SK-N-SH (cell line): ENCODE measurements at regions of chr3 and their contacts with region 1.

Region 1: DNA sequence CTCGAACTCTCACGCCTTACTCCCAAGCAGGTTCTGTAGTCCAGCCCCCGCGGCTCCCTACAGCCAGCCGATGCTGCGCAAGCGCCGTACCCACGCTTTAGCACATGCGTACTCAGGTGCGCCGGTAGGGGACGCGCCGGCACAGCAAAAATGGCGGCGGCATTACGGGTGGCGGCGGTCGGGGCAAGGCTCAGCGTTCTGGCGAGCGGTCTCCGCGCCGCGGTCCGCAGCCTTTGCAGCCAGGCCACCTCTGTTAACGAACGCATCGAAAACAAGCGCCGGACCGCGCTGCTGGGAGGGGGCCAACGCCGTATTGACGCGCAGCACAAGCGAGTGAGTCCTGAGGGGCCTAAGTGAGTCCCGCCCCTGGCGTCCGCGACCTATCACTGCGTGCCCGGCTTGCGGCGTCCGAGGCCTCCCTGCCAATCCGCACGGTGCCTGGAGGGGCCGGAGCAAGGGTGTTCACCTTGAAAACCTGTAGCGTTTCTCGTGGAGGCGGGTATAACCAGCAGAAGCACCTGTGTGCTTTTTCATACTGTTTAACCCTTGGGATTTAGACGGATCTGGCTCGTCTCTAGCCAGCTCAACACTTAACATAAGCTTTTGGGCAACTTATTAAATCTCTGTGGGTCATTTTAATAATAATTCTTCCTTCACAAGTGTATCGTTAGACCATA is at the start of gene PCCB:
- DNase-seq: peak; percentile 93
- H3K4me3 ChIP-seq: peak within 1 kb of the TSS; percentile 66 to 76
- H3K27ac ChIP-seq: peak within 1 kb of the TSS; percentile 90 to 94
- H3K4me1 ChIP-seq: peaks cover 0 to 9% of the 10 kb centered on the region in 2 experiments; a peak in 1 of 4 replicates
- H3K27me3 ChIP-seq: no peaks in the 10 kb centered on the region
- CTCF ChIP-seq: peak; percentile 59
- EP300 ChIP-seq: no peak
- RAD21 ChIP-seq: peak; percentile 33
- polyA plus RNA-seq, gene PCCB: 67.5 and 79.8 TPM in 2 replicates

Region 2: DNA sequence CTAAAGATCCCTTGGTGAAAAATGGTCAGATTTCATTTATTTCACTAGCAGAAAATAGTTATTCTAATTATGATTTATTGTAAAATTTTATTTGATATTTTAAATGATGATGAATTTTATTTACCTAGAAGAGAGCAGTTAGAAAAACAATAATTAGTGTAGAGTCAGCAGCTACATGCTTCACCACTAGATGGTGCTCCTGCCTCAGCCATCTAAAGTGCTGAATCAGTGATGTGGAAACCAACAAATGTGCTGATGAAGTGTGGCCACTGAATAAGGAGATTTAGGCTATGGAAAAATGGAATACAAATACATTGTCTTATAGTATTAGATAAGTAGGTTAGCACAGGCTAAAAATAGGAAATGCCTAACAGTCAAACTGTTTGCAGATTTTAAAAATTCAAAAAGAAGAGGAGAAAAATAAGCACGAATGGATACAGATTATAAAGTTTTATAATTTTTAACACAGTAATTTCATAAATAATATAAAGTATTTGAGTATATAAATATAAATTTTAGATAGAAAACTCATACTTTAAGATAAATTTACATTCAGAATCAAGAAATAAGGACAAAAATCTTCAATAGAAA is 175.1 kb before region 1 on chr3:
- CTCF ChIA-PET with region 1: interaction called, 14 read pairs
- POLR2A ChIA-PET with region 1: no interaction called
- DNase-seq: peak; percentile 53
- H3K4me3 ChIP-seq: no peak overlapping the region
- H3K27ac ChIP-seq: peak overlapping the region in 1 of 2 experiments; percentile 66; a peak in 2 of 4 replicates
- H3K4me1 ChIP-seq: peaks cover 7 to 10% of the 10 kb centered on the region in 2 experiments
- H3K27me3 ChIP-seq: no peaks in the 10 kb centered on the region
- CTCF ChIP-seq: peak; percentile 93
- EP300 ChIP-seq: no peak
- RAD21 ChIP-seq: peak; percentile 99

Region 3: GRCh38 chr3:136464502-136464901 is 214.1 kb after region 1 on chr3:
- CTCF ChIA-PET with region 1: no interaction called
- POLR2A ChIA-PET with region 1: no interaction called
- DNase-seq: no peak
- H3K4me3 ChIP-seq: no peak overlapping the region
- H3K27ac ChIP-seq: peak overlapping the region in 1 of 2 experiments; percentile 32; a peak in 2 of 4 replicates
- H3K4me1 ChIP-seq: no peaks in the 10 kb centered on the region
- H3K27me3 ChIP-seq: no peaks in the 10 kb centered on the region
- CTCF ChIP-seq: no peak
- EP300 ChIP-seq: no peak
- RAD21 ChIP-seq: no peak